A549 (cell line): ENCODE measurements at regions of chr17 and their contacts with region 1.

Region 1: GRCh38 chr17:78442648-78443128 is 64.2 kb downstream of the PGS1 start:
- DNase-seq: no peak
- ATAC-seq: no peak
- H3K4me3 ChIP-seq: no peak overlapping the region
- H3K27ac ChIP-seq: no peak overlapping the region
- H3K4me1 ChIP-seq: 0 out of 3 replicates have a peak, but pooled peaks cover 3% of the 10 kb centered on the region
- CTCF ChIP-seq: no peak
- EP300 ChIP-seq: no peak
- POLR2A ChIP-seq: no peak
- RAD21 ChIP-seq: no peak

Region 2: DNA sequence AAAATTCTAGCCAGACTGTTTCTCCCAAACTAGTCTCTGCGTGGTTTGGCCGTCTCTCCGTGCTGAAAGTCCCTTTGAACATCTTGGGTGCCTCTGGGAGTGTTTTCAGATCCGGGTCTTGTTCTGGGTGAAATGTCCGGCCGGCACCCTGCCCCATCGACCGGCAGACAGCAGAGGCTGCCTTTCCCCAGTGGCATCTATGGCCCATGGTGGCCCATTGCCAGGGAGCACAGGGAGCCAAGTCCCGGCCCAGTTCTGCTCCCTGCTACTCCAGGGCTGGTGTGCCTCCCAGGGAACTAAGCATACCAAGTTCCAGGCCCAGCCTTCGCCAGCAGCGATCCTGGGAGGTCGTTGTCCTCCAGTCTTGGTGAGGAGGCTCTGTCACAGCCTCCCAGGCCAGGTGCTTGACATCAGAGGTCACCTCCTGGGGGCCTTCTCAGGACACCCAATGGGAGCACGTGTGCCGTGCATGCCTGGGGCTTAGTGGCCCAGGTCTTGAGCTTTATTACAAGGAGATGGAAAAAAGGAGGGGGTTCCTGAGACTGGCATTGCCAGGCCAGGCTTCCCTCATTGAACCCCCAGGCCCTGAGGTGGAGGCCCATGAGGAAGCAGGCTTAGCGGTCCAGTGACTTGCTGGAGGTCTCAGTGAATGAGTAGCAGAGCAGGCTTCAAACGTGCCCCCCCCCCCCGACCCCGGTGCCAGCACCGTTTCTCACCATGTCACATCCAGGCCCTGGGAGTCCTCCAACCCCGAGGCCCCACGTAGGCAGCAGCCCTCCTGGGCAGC is 10.3 kb before region 1 on chr17:
- CTCF ChIA-PET with region 1: interaction called, 67 read pairs
- POLR2A ChIA-PET with region 1: no interaction called
- DNase-seq: no peak
- ATAC-seq: no peak
- H3K4me3 ChIP-seq: no peak overlapping the region
- H3K27ac ChIP-seq: no peak overlapping the region
- H3K4me1 ChIP-seq: no peaks in the 10 kb centered on the region
- CTCF ChIP-seq: no peak
- EP300 ChIP-seq: no peak
- POLR2A ChIP-seq: no peak
- RAD21 ChIP-seq: no peak

Region 3: DNA sequence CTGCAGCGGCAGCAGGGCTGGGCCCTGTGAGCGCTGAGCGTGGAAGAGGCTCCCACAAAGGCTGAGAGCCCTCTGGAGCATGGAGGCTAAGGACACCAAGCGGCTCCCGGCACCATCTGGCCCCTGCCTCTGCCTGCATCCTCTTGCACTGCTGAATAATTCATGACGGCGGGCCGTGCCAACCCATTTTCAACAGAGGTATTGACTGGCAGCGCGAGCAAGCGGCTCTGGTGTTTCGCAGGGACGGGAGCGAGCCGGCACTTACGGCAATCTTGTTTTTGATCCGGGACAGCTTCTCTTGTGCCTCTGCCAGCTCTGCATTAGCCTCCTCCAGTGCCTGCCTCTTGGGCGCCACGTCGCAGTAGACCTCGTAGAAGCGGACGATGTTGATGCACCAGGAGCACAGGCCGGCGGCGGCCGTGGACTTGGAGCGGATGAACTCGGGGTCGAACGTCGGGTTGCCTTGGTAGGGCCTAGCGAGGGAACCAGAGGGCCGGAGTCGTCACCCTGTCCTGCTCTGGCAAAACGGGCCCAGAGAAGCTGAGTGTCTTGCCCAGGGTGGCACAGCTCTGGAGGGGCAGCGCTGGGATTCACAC is 16.1 kb after region 1 on chr17:
- CTCF ChIA-PET with region 1: interaction called, 18 read pairs
- POLR2A ChIA-PET with region 1: no interaction called
- DNase-seq: no peak
- ATAC-seq: no peak
- H3K4me3 ChIP-seq: no peak overlapping the region
- H3K27ac ChIP-seq: no peak overlapping the region
- H3K4me1 ChIP-seq: no peaks in the 10 kb centered on the region
- CTCF ChIP-seq: no peak
- EP300 ChIP-seq: no peak
- POLR2A ChIP-seq: no peak
- RAD21 ChIP-seq: no peak